Activated CD4-positive, alpha-beta T cell treated with anti-CD3 and anti-CD28 coated beads, Interleukin-2, amount 10 ng/mL, durations not matched to agents 24 days and 14 days (primary cell): ENCODE measurements at regions of chr16 and their contacts with region 1.

Region 1: DNA sequence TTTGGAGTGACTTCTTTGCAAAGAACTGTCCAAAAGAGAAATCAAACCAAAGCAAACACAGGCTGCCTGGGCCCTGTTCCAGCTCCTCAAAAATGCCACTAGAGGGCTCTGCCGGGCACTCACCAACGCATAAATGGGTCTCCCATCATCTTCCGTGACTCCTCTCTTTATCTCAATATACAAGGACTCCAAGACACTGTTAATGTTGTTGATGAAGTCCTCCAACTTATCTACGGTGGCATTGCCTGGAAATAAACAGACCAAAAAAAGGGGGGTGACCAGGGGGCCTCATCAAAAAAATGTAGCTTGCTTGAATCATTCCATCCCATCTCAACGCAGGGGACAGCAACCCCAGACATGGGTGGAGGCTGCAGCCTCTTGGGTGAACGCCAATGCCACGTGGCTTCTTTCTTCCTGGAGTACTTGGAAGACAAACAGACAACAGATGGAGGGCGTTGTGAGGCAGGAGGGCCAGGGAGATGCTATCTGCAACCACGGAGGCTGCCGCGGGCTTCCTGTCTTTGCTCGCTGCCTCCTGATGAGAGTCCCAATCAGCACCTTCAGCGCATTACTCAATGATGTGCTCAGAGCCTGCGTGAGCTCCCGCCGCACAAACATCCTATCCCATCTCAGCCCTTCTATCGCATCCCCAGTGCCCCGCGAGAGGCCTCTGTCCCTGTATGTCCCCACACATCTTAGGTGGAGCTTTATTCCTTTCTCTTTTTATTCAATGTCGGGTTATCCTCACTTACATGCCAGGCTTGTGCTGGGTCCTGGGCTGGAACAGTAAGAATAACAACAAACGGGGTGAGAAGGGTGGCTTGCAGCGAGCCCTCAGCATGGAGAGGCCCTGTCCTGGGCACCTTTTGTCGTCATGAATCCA is 32.0 kb downstream of the KDM8 start:
- DNase-seq: peak; percentile 97
- H3K4me3 Mint-ChIP-seq: peak overlapping the region; percentile 65
- H3K27ac Mint-ChIP-seq: peak overlapping the region; percentile 100
- H3K4me1 Mint-ChIP-seq: peaks cover 90% of the 10 kb centered on the region
- H3K27me3 Mint-ChIP-seq: no peaks in the 10 kb centered on the region

Region 2: DNA sequence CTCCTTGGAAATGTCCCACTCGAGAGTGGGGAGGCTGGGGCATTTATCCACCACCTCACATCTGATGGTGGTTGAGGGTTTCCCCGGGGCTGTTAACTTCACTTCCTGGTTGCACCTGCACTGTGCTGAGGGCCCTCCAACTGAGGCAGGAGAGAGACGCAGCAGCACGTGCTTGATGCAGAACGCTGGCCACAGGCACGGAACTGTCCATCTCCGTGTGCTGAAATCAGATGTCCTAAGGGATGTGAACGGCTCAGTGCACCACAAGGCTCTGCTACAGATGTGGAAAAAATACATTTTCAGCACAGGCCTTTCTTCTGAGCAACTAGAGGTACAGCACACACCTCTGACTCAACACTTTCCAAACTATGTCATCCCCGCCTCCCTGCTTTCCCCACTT is 283.3 kb before region 1 on chr16:
- intact Hi-C with region 1: no loop called
- DNase-seq: no peak
- H3K4me3 Mint-ChIP-seq: no peak overlapping the region
- H3K27ac Mint-ChIP-seq: no peak overlapping the region
- H3K4me1 Mint-ChIP-seq: no peaks in the 10 kb centered on the region
- H3K27me3 Mint-ChIP-seq: peaks cover 7% of the 10 kb centered on the region

Region 3: GRCh38 chr16:27179500-27180072 is 55.7 kb before region 1 on chr16:
- intact Hi-C with region 1: loop called (anchors 1 kb)
- DNase-seq: peak; percentile 96
- H3K4me3 Mint-ChIP-seq: peak overlapping the region; percentile 3
- H3K27ac Mint-ChIP-seq: peak overlapping the region; percentile 73
- H3K4me1 Mint-ChIP-seq: peaks cover 38% of the 10 kb centered on the region
- H3K27me3 Mint-ChIP-seq: peaks cover 3% of the 10 kb centered on the region

Region 4: GRCh38 chr16:27253526-27253930 is 18.2 kb after region 1 on chr16:
- intact Hi-C with region 1: loop called (anchors 1 kb)
- DNase-seq: no peak
- H3K4me3 Mint-ChIP-seq: peak overlapping the region; percentile 74
- H3K27ac Mint-ChIP-seq: peak overlapping the region; percentile 96
- H3K4me1 Mint-ChIP-seq: peaks cover 83% of the 10 kb centered on the region
- H3K27me3 Mint-ChIP-seq: no peaks in the 10 kb centered on the region

Region 5: GRCh38 chr16:27318392-27319226 is 83.3 kb after region 1 on chr16:
- intact Hi-C with region 1: loop called (anchors 1 kb)
- DNase-seq: peak; percentile 89
- H3K4me3 Mint-ChIP-seq: peak overlapping the region; percentile 100
- H3K27ac Mint-ChIP-seq: peak overlapping the region; percentile 96
- H3K4me1 Mint-ChIP-seq: peaks cover 62% of the 10 kb centered on the region
- H3K27me3 Mint-ChIP-seq: no peaks in the 10 kb centered on the region

Region 6: GRCh38 chr16:27328937-27329336 is 93.6 kb after region 1 on chr16:
- intact Hi-C with region 1: no loop called
- DNase-seq: no peak
- H3K4me3 Mint-ChIP-seq: peak overlapping the region; percentile 63
- H3K27ac Mint-ChIP-seq: peak overlapping the region; percentile 87
- H3K4me1 Mint-ChIP-seq: peaks cover 72% of the 10 kb centered on the region
- H3K27me3 Mint-ChIP-seq: no peaks in the 10 kb centered on the region

Region 7: GRCh38 chr16:27401768-27402568 is 166.7 kb after region 1 on chr16 and contains the start of gene IL21R:
- intact Hi-C with region 1: loop called (anchors 1 kb)
- DNase-seq: peak; percentile 94
- H3K4me3 Mint-ChIP-seq: peak within 1 kb of the TSS; percentile 100
- H3K27ac Mint-ChIP-seq: peak within 1 kb of the TSS; percentile 97
- H3K4me1 Mint-ChIP-seq: peaks cover 47% of the 10 kb centered on the region
- H3K27me3 Mint-ChIP-seq: no peaks in the 10 kb centered on the region
- total RNA-seq, gene IL21R: 94.9 and 100 TPM in 2 replicates